ENCODE measurements at regions of chr16 and their contacts with region 1.

Region 1: GRCh38 chr16:86931399-86931941 is 353.1 kb downstream of the FOXL1 start:
- DNase-seq: peak; percentile 98
- H3K4me3 ChIP-seq: no peak overlapping the region
- H3K27ac ChIP-seq: peak overlapping the region; percentile 91
- H3K4me1 ChIP-seq: peaks cover 49% of the 10 kb centered on the region
- H3K27me3 ChIP-seq: no peaks in the 10 kb centered on the region
- CTCF ChIP-seq: peak in 1 of 2 donors; percentile 32
- POLR2A ChIP-seq: peak; percentile 68

Region 2: GRCh38 chr16:86563489-86564345 is 367.8 kb before region 1 on chr16:
- CTCF ChIA-PET with region 1: interaction called, 16 read pairs
- POLR2A ChIA-PET with region 1: interaction called, 5 read pairs
- dilution Hi-C with region 1: no loop called
- intact Hi-C with region 1: loop called (anchors 1 kb)
- DNase-seq: peak; percentile 92
- H3K4me3 ChIP-seq: peak overlapping the region; percentile 28 to 99 (median 39)
- H3K27ac ChIP-seq: peak overlapping the region; percentile 78
- H3K4me1 ChIP-seq: peaks cover 18% of the 10 kb centered on the region
- H3K27me3 ChIP-seq: no peaks in the 10 kb centered on the region
- CTCF ChIP-seq: peak; percentile 99 to 100
- POLR2A ChIP-seq: no peak

Region 3: GRCh38 chr16:86740906-86741799 is 190.3 kb before region 1 on chr16:
- CTCF ChIA-PET with region 1: no interaction called
- POLR2A ChIA-PET with region 1: no interaction called
- dilution Hi-C with region 1: no loop called
- intact Hi-C with region 1: loop called (anchors 1 kb)
- DNase-seq: peak; percentile 92
- H3K4me3 ChIP-seq: peak overlapping the region in 2 of 3 experiments; percentile 15 to 31
- H3K27ac ChIP-seq: peak overlapping the region; percentile 96
- H3K4me1 ChIP-seq: peaks cover 19% of the 10 kb centered on the region
- H3K27me3 ChIP-seq: no peaks in the 10 kb centered on the region
- CTCF ChIP-seq: no peak
- POLR2A ChIP-seq: peak; percentile 75

Region 4: DNA sequence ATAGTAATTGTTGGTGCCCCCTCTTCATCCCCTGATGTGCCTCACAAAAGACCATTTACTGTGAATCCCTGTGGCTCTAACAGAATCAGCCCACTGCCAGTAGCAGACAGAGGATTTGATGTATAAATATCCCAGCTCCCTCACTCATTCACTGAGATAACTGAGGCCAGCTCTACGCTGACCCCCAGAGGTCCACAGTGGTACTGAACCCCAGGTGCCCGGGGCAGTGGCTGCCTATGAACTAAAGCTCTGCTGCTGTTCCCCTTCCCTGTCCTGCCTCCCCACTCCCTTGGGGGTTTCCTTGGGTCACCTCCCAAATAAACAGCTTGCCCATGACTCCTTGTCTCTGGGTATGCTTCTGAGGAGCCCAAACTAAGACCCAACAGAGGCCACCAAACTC is 57.3 kb before region 1 on chr16:
- CTCF ChIA-PET with region 1: interaction called, 17 read pairs
- POLR2A ChIA-PET with region 1: no interaction called
- dilution Hi-C with region 1: no loop called
- intact Hi-C with region 1: no loop called
- DNase-seq: peak; percentile 60
- H3K4me3 ChIP-seq: no peak overlapping the region
- H3K27ac ChIP-seq: no peak overlapping the region
- H3K4me1 ChIP-seq: no peaks in the 10 kb centered on the region
- H3K27me3 ChIP-seq: no peaks in the 10 kb centered on the region
- CTCF ChIP-seq: peak; percentile 80 to 81
- POLR2A ChIP-seq: no peak

Region 5: DNA sequence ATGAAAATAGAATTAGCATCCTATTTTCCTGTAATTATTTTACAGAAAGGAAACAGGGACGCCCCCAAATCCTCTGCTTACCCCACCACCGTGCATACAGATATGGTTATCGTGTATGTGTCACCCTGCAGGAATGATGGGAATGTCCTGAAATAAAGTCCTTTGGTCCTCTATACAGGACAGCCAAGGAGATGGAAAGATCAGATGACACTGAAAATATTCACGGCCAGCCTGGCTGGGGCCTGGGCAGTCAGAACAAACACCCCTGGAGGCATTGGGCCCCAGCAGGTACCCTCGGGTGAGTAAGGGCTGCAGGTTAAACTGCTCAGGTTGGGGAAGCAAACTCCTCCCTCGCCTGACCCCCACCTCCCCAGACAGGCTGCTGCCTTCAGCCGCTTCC is 14.9 kb after region 1 on chr16:
- CTCF ChIA-PET with region 1: interaction called, 6 read pairs
- POLR2A ChIA-PET with region 1: interaction called, 5 read pairs
- dilution Hi-C with region 1: no loop called
- intact Hi-C with region 1: loop called (anchors 1 kb)
- DNase-seq: peak; percentile 49
- H3K4me3 ChIP-seq: peak overlapping the region in 1 of 3 experiments; percentile 35
- H3K27ac ChIP-seq: peak overlapping the region; percentile 61
- H3K4me1 ChIP-seq: peaks cover 28% of the 10 kb centered on the region
- H3K27me3 ChIP-seq: no peaks in the 10 kb centered on the region
- CTCF ChIP-seq: no peak
- POLR2A ChIP-seq: no peak

Region 6: DNA sequence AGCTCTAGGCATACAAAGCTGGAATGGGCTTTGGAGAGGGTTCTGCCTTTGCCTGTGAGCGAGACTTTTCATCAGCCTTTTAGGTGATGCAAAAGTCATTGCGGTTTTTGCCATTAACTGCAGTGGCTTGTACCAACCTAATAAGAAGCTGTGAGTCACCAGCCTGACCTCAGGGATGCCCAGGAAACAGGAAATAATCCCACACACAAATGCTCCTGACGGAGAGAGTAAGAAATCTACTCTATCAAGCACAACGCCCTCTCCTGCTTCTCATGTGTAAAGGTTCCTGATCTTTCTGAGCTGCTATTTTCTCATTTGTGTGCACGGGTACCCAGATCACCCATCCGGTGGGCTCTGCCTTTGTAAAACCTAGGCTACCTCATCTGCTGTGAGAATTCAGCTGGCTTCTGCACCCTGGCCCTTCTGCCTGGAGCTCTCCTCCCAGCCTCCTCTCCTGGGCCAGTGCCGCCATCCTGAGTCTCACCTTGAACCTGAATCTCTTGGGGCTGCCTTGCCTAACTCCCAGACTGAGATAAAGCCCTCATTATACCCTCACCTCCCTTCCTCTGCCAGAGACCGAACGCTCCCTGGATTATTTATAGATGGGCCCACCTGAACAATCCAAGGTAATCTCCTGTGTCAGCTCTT is 86.0 kb after region 1 on chr16:
- CTCF ChIA-PET with region 1: interaction called, 22 read pairs
- POLR2A ChIA-PET with region 1: no interaction called
- dilution Hi-C with region 1: no loop called
- intact Hi-C with region 1: loop called (anchors 1 kb)
- DNase-seq: peak; percentile 88
- H3K4me3 ChIP-seq: peak overlapping the region in 1 of 3 experiments; percentile 8
- H3K27ac ChIP-seq: peak overlapping the region; percentile 21
- H3K4me1 ChIP-seq: peaks cover 15% of the 10 kb centered on the region
- H3K27me3 ChIP-seq: no peaks in the 10 kb centered on the region
- CTCF ChIP-seq: peak; percentile 50 to 52
- POLR2A ChIP-seq: no peak

Region 7: GRCh38 chr16:87387942-87388817 is 456.7 kb after region 1 on chr16:
- CTCF ChIA-PET with region 1: no interaction called
- POLR2A ChIA-PET with region 1: no interaction called
- dilution Hi-C with region 1: no loop called
- intact Hi-C with region 1: loop called (anchors 5 kb)
- DNase-seq: peak; percentile 99
- H3K4me3 ChIP-seq: no peak overlapping the region
- H3K27ac ChIP-seq: peak overlapping the region; percentile 84
- H3K4me1 ChIP-seq: peaks cover 21% of the 10 kb centered on the region
- H3K27me3 ChIP-seq: no peaks in the 10 kb centered on the region
- CTCF ChIP-seq: no peak
- POLR2A ChIP-seq: peak; percentile 8

Measured in endothelial cell of umbilical vein (primary cell).